ENCODE measurements at regions of chr1 and their contacts with region 1.

Region 1: DNA sequence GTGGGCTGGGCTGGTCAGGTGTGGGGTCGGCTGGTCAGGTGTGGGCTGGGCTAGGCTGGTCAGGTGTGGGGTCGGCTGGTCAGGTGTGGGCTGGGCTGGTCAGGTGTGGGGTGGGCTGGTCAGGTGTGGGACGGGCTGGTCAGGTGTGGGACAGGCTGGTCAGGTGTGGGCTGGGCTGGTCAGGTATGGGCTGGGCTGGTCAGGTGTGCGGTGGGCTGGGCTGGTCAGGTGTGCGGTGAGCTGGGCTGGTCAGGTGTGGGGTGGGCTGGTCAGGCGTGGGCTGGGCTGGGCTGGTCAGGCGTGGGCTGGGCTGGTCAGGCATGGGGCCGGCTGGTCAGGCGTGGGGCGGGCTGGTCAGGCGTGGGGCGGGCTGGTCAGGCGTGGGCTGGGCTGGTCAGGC is 6.3 kb upstream of the FNDC10 start:
- DNase-seq: no peak
- ATAC-seq: no peak
- H3K4me3 Mint-ChIP-seq: no peak overlapping the region
- H3K27ac Mint-ChIP-seq: no peak overlapping the region
- H3K4me1 Mint-ChIP-seq: peaks cover 5 to 18% (median 10%) of the 10 kb centered on the region in 4 donors
- H3K27me3 Mint-ChIP-seq: no peaks in the 10 kb centered on the region

Region 2: GRCh38 chr1:1208713-1209433 is 397.4 kb before region 1 on chr1:
- POLR2A ChIA-PET with region 1: no interaction called
- DNase-seq: peak in 5 of 10 donors; percentile 20 to 68 (median 36)
- ATAC-seq: peak; percentile 27 to 51
- H3K4me3 Mint-ChIP-seq: peak overlapping the region; percentile 59 to 89 (median 82)
- H3K27ac Mint-ChIP-seq: peak overlapping the region in 9 of 10 donors; percentile 22 to 89 (median 75)
- H3K4me1 Mint-ChIP-seq: peaks cover 5 to 28% (median 23%) of the 10 kb centered on the region in 4 donors
- H3K27me3 Mint-ChIP-seq: peaks cover 0 to 8% (median 0%) of the 10 kb centered on the region in 5 donors

Region 3: GRCh38 chr1:1574721-1575537 is 31.3 kb before region 1 on chr1 and contains the start of gene SSU72:
- POLR2A ChIA-PET with region 1: interaction called, 11 read pairs
- DNase-seq: peak; percentile 85 to 96 (median 92)
- ATAC-seq: peak; percentile 77 to 83
- H3K4me3 Mint-ChIP-seq: peak within 1 kb of the TSS; percentile 92 to 99 (median 98)
- H3K27ac Mint-ChIP-seq: peak within 1 kb of the TSS; percentile 99 to 100 (median 100)
- H3K4me1 Mint-ChIP-seq: peaks cover 17 to 44% (median 33%) of the 10 kb centered on the region in 4 donors
- H3K27me3 Mint-ChIP-seq: no peaks in the 10 kb centered on the region
- polyA plus RNA-seq, gene SSU72: 219 to 290 (median 248) TPM

Region 4: DNA sequence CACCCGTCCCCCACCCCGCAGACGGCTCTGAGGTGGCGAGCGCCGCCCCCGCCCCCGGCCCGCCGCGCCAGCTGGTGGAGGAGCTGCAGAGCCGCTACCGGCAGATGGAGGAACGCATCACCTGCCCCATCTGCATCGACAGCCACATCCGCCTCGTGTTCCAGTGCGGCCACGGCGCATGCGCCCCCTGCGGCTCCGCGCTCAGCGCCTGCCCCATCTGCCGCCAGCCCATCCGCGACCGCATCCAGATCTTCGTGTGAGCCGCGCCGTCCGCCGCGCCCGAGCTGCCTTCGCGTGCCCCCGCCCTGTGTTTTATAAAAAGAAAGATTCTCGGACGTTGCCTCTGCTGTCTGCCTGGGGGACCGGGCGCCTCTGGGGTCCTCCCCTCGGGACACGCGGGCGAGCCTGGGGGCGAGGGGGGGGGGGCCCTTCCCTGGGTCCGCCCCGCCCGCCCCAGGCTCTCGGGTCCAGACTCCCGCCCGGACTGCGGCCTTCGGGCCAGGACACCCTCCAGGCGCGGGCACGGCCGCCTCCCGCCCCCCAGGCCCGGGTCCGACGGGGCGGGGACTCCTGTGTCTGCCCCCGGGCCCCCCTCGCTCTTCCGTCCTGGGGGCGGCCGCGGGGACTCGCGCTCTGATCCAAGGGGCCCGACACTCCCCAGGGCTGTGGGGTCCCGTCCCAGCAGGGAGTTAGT is 24.2 kb after region 1 on chr1:
- POLR2A ChIA-PET with region 1: interaction called, 16 read pairs
- DNase-seq: peak; percentile 90 to 97 (median 94)
- ATAC-seq: peak; percentile 73 to 78
- H3K4me3 Mint-ChIP-seq: peak overlapping the region; percentile 85 to 94 (median 91)
- H3K27ac Mint-ChIP-seq: peak overlapping the region; percentile 83 to 99 (median 95)
- H3K4me1 Mint-ChIP-seq: peaks cover 4 to 12% (median 7%) of the 10 kb centered on the region in 4 donors
- H3K27me3 Mint-ChIP-seq: peaks cover 0 to 4% (median 0%) of the 10 kb centered on the region in 5 donors